Activated CD4-positive, alpha-beta memory T cell treated with anti-CD3 and anti-CD28 coated beads for 36 hours (primary cell): ENCODE measurements at regions of chr1 and their contacts with region 1.

Region 1: DNA sequence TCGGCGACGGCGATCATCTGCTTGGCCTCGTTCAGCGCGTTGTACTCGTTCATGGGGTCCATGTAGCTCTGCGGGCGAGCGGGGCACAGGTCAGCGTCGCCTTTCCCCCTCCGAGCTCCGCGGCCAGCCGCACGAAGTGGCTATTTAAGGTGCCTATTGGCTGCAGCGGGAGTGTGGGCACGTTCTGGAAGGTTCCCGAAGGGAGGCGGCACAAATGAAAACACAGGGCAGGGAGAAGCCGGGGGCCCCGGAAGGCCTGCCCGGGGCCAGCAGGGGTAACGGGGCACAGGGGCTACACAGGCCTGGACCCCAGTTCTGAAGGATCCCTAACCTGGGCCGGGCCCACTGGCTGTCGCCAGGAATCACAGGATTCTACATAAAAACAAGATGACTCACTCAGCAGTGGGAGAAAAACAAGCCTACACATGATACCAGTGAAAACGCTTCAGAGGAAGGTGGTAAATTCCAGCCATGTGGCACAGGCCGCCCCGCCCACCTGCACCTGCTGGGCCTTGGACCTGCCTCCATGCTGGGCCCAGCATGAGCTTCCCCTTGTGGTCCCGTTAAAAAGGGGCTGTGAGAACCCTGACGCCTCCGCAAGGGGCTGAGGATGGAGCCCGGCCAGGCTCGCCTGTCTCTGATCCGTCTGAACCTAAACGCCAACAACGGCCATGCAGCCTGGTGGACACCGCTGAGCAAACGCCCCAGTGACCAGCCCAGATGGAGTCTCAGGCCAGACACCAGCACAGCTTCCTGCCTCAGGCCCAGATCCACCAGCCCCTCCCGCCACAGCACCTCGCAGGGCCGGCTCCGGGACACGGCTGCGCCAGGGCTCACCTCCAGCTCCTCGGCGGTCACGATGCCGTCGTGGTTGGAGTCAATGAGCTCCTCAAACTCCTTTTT is 3.9 kb upstream of the TNFRSF4 start:
- DNase-seq: peak; percentile 84
- H3K4me3 Mint-ChIP-seq: peak overlapping the region; percentile 78
- H3K27ac Mint-ChIP-seq: peak overlapping the region; percentile 100
- H3K4me1 Mint-ChIP-seq: peaks cover 62% of the 10 kb centered on the region
- H3K27me3 Mint-ChIP-seq: no peaks in the 10 kb centered on the region

Region 2: GRCh38 chr1:1200851-1201810 is 16.7 kb before region 1 on chr1:
- CTCF ChIA-PET with region 1: interaction called, 9 read pairs
- POLR2A ChIA-PET with region 1: interaction called, 107 read pairs
- intact Hi-C with region 1: loop called (anchors 2 kb)
- DNase-seq: peak; percentile 93
- H3K4me3 Mint-ChIP-seq: peak overlapping the region; percentile 56
- H3K27ac Mint-ChIP-seq: peak overlapping the region; percentile 78
- H3K4me1 Mint-ChIP-seq: peaks cover 13% of the 10 kb centered on the region
- H3K27me3 Mint-ChIP-seq: no peaks in the 10 kb centered on the region

Region 3: GRCh38 chr1:1206376-1207260 is 11.3 kb before region 1 on chr1 and contains the start of gene TNFRSF18:
- CTCF ChIA-PET with region 1: interaction called, 9 read pairs
- POLR2A ChIA-PET with region 1: interaction called, 107 read pairs
- intact Hi-C with region 1: loop called (anchors 1 kb)
- DNase-seq: peak; percentile 76
- H3K4me3 Mint-ChIP-seq: peak within 1 kb of the TSS; percentile 84
- H3K27ac Mint-ChIP-seq: peak within 1 kb of the TSS; percentile 100
- H3K4me1 Mint-ChIP-seq: peaks cover 31% of the 10 kb centered on the region
- H3K27me3 Mint-ChIP-seq: no peaks in the 10 kb centered on the region
- total RNA-seq, gene TNFRSF18: 375 to 387 TPM

Region 4: GRCh38 chr1:1231400-1232223 is 13.7 kb after region 1 on chr1 and contains the start of gene SDF4:
- CTCF ChIA-PET with region 1: interaction called, 4 read pairs
- POLR2A ChIA-PET with region 1: interaction called, 35 read pairs
- intact Hi-C with region 1: loop called (anchors 2 kb)
- DNase-seq: peak; percentile 98
- H3K4me3 Mint-ChIP-seq: peak within 1 kb of the TSS; percentile 94
- H3K27ac Mint-ChIP-seq: peak within 1 kb of the TSS; percentile 92
- H3K4me1 Mint-ChIP-seq: peaks cover 33% of the 10 kb centered on the region
- H3K27me3 Mint-ChIP-seq: no peaks in the 10 kb centered on the region
- total RNA-seq, gene SDF4: 302 to 305 TPM

Region 5: GRCh38 chr1:1358433-1359261 is 140.8 kb after region 1 on chr1 and contains the start of gene MXRA8:
- CTCF ChIA-PET with region 1: no interaction called
- POLR2A ChIA-PET with region 1: no interaction called
- intact Hi-C with region 1: no loop called
- DNase-seq: no peak
- H3K4me3 Mint-ChIP-seq: no peak within 1 kb of the TSS
- H3K27ac Mint-ChIP-seq: no peak within 1 kb of the TSS
- H3K4me1 Mint-ChIP-seq: peaks cover 6% of the 10 kb centered on the region
- H3K27me3 Mint-ChIP-seq: peaks cover 12% of the 10 kb centered on the region
- total RNA-seq, gene MXRA8: 0.19 TPM in 1 of 2 experiments, not detected in the other